CD4-positive, alpha-beta memory T cell (primary cell): ENCODE measurements at regions of chr20 and their contacts with region 1.

Region 1: GRCh38 chr20:23995905-23996666 is 7.5 kb upstream of the GGTLC1 start:
- DNase-seq: peak in 4 of 5 donors; percentile 30 to 45 (median 41)
- H3K4me3 ChIP-seq: no peak overlapping the region
- H3K4me3 Mint-ChIP-seq: peak overlapping the region in 1 of 8 donors; percentile 15
- H3K27ac ChIP-seq: no peak overlapping the region
- H3K27ac Mint-ChIP-seq: peak overlapping the region in 1 of 7 donors; percentile 11
- H3K4me1 ChIP-seq: no peaks in the 10 kb centered on the region
- H3K4me1 Mint-ChIP-seq: no peaks in the 10 kb centered on the region
- H3K27me3 ChIP-seq: no peaks in the 10 kb centered on the region
- H3K27me3 Mint-ChIP-seq: peaks cover 0 to 2% of the 10 kb centered on the region in 2 donors

Region 2: DNA sequence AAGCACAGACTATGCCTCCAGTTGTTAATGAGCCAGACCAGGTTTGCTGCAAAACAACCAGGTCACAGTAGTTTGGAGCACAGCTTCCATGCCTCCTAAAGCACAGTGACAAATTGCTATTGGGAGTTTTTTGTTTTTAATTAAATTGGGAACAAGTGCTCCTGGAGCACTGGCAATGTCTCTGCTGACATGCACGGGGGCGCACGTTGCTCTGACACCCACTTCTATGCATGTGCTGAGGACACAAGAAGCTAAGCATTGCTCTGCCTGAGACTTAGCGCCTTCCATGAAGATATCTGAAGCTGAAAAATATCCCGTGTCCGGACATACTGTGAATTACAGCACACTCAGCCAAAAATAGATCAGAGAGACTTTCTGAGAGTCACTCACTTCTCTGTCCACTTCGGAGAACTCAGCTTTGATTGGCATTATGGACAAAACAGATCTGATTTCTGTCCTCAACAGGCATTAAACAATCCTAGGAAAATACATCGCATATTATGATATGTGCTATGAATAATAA is 11.0 kb after region 1 on chr20:
- CTCF ChIA-PET with region 1: interaction called, 12 read pairs
- POLR2A ChIA-PET with region 1: no interaction called
- intact Hi-C with region 1: no loop called
- DNase-seq: no peak
- H3K4me3 ChIP-seq: no peak overlapping the region
- H3K4me3 Mint-ChIP-seq: no peak overlapping the region
- H3K27ac ChIP-seq: no peak overlapping the region
- H3K27ac Mint-ChIP-seq: peak overlapping the region in 1 of 7 donors; percentile 47
- H3K4me1 ChIP-seq: no peaks in the 10 kb centered on the region
- H3K4me1 Mint-ChIP-seq: peaks cover 0 to 1% (median 0%) of the 10 kb centered on the region in 4 donors
- H3K27me3 ChIP-seq: no peaks in the 10 kb centered on the region
- H3K27me3 Mint-ChIP-seq: no peaks in the 10 kb centered on the region